ENCODE measurements at regions of chr2 and their contacts with region 1.

Region 1: DNA sequence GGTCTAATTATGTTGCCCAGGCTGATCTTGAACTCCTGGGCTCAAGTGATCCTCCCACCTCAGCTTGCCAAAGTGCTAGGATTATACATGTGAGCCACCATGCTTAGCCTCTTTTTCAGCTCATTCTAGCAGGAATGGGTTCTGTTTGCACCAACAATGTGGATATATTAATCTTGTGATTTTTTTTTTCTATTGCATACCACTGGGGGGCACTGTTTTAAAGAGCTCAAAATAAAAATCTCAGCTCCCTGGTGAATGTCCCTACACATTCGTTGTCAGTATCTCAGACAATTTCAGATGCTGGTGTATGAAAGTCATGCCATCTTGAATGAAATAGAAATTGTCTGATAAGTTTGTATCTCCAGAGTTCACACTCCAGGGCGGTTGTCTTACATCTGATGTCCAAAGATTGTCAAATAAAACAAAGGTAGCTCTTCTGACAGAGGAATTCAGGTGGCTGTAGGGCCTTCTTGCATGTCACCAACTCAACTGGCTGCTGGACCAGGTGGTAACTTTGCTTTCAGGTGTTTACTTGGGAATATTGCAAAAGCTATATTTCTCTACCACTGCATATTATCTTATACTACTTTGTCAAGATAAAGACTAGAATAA is 3.1 kb upstream of the MATN3 start:
- DNase-seq: no peak
- H3K4me3 Mint-ChIP-seq: no peak overlapping the region
- H3K27ac Mint-ChIP-seq: no peak overlapping the region
- H3K4me1 Mint-ChIP-seq: peaks cover 11% of the 10 kb centered on the region
- H3K27me3 Mint-ChIP-seq: peaks cover 37% of the 10 kb centered on the region

Region 2: GRCh38 chr2:19911799-19912509 is 103.6 kb before region 1 on chr2:
- CTCF ChIA-PET with region 1: no interaction called
- POLR2A ChIA-PET with region 1: no interaction called
- DNase-seq: no peak
- H3K4me3 Mint-ChIP-seq: no peak overlapping the region
- H3K27ac Mint-ChIP-seq: no peak overlapping the region
- H3K4me1 Mint-ChIP-seq: no peaks in the 10 kb centered on the region
- H3K27me3 Mint-ChIP-seq: peaks cover 7% of the 10 kb centered on the region

Region 3: DNA sequence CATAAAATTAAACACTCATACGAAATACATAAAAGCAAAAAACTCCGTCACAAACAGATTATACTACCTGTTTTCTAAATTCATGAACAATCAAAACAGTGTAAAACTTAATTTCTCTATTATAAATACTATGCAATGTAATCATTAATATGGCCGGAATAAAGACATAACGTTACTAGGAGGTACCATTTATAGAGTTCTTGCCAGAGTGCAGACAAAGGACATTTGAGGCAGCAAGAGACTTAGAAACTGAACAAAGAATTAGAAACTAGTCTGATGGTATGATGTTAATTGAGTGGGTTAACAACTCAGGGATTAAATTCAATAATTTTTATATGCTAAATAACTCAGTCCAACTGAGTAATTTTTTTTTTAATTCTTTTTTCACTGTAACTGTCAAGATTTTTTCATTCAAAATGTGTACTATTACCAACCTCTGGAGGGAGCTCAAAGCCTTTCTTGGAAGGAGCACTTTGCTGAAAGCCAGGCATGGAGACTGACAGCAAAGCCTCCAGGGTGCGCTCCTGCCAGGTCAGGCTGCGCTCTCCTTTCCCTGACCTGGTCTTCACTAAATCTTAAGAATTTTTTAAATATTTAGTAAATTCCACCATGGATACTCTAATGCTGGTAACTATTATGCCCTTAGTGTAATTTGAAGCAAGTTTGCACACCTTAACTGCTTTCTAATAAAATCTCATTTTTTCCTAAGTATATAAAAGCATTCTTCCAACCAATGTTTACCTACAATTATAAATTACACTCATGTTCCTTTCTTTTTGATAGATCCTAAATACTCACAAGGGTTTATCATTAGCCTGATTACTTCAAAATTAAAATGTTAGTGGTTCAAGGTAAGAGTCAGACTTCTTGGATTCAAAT is 59.8 kb before region 1 on chr2:
- CTCF ChIA-PET with region 1: interaction called, 11 read pairs
- POLR2A ChIA-PET with region 1: no interaction called
- DNase-seq: peak; percentile 56
- H3K4me3 Mint-ChIP-seq: no peak overlapping the region
- H3K27ac Mint-ChIP-seq: no peak overlapping the region
- H3K4me1 Mint-ChIP-seq: no peaks in the 10 kb centered on the region
- H3K27me3 Mint-ChIP-seq: no peaks in the 10 kb centered on the region

Region 4: GRCh38 chr2:20035955-20036666 is 20.5 kb after region 1 on chr2:
- CTCF ChIA-PET with region 1: interaction called, 18 read pairs
- POLR2A ChIA-PET with region 1: interaction called, 3 read pairs
- DNase-seq: no peak
- H3K4me3 Mint-ChIP-seq: no peak overlapping the region
- H3K27ac Mint-ChIP-seq: peak overlapping the region; percentile 36
- H3K4me1 Mint-ChIP-seq: peaks cover 8% of the 10 kb centered on the region
- H3K27me3 Mint-ChIP-seq: no peaks in the 10 kb centered on the region

Region 5: DNA sequence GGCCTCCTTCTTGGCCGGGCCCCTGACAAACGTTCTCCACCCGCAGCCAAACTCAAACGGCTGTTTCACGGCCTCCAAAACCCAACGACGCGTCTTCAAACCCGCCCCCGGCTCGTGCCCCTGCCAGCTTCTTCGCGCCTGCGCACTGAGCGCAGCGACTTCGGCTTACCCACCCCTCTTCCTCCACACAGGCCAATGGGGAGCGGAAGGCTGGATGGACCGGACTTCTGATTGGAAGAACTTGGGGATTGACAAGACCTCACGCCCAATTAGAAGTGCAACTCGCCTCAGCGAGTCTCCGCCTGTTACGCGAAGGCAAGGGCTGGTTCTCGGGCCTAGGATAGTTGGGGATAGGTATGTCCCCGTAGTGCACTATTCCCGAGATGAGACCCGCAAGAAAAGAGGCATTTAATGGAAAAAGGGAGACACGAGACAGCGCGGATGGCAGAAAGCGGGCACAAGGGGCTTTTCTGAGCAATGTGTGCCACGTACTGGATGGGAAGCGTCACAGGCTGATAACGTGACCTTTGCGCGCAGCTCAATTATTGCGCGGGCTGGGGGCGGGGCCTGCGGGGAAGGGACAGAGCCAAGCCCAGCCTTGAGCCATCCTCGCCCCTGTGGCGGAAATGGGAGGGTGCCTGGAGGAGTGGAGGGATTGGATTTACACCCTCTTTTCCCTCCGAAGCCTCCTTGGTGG is 36.1 kb after region 1 on chr2 and contains the start of gene LAPTM4A:
- CTCF ChIA-PET with region 1: interaction called, 30 read pairs
- POLR2A ChIA-PET with region 1: interaction called, 6 read pairs
- DNase-seq: peak; percentile 98
- H3K4me3 Mint-ChIP-seq: no peak within 1 kb of the TSS
- H3K27ac Mint-ChIP-seq: no peak within 1 kb of the TSS
- H3K4me1 Mint-ChIP-seq: peaks cover 27% of the 10 kb centered on the region
- H3K27me3 Mint-ChIP-seq: peaks cover 20% of the 10 kb centered on the region
- total RNA-seq, gene LAPTM4A: 36.1 to 36.7 TPM

Region 6: DNA sequence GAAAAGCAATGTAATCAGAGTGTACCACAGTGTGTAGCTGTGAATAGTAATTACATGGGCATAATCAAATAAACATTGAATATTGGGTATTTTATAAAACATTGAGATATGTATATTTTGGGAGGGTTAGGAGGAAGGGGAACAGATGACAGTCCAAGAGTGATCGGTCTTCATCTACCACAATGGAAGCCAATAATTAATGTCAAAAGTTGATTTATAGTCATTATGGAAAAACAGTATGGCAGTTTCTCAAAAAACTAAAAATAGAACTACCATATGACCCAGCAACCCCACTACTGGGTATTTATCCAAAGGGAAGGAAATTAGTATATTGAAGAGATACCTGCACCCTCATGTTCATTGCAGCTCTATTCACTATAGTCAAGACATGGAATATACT is 41.7 kb after region 1 on chr2:
- CTCF ChIA-PET with region 1: interaction called, 30 read pairs
- POLR2A ChIA-PET with region 1: interaction called, 6 read pairs
- DNase-seq: no peak
- H3K4me3 Mint-ChIP-seq: no peak overlapping the region
- H3K27ac Mint-ChIP-seq: no peak overlapping the region
- H3K4me1 Mint-ChIP-seq: no peaks in the 10 kb centered on the region
- H3K27me3 Mint-ChIP-seq: peaks cover 49% of the 10 kb centered on the region

Region 7: GRCh38 chr2:20097879-20098714 is 82.5 kb after region 1 on chr2:
- CTCF ChIA-PET with region 1: interaction called, 26 read pairs
- POLR2A ChIA-PET with region 1: no interaction called
- DNase-seq: peak; percentile 79
- H3K4me3 Mint-ChIP-seq: no peak overlapping the region
- H3K27ac Mint-ChIP-seq: no peak overlapping the region
- H3K4me1 Mint-ChIP-seq: peaks cover 3% of the 10 kb centered on the region
- H3K27me3 Mint-ChIP-seq: peaks cover 21% of the 10 kb centered on the region

Region 8: DNA sequence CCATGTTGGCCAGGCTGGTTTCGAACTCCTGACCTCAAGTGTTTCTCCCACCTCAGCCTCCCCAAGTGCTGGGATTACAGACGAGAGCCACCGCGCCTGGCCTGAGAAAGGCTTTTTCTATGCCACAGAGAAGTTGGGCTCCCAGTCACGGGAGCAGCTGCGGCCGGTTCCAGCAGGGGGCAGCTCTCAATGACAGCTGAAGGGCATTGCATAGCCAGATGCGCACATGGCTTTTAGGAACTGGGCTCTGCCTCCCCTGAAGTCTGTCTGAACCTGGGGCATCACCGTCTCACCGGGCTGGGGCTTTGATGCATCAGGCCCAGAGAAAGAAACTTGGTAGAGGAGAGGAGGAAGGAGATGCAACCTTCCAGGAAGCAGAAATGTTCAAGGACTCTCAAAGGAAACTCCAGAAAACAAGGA is 120.1 kb after region 1 on chr2:
- CTCF ChIA-PET with region 1: no interaction called
- POLR2A ChIA-PET with region 1: no interaction called
- DNase-seq: peak; percentile 38
- H3K4me3 Mint-ChIP-seq: no peak overlapping the region
- H3K27ac Mint-ChIP-seq: no peak overlapping the region
- H3K4me1 Mint-ChIP-seq: no peaks in the 10 kb centered on the region
- H3K27me3 Mint-ChIP-seq: peaks cover 8% of the 10 kb centered on the region

Region 9: GRCh38 chr2:20164061-20164733 is 148.6 kb after region 1 on chr2:
- CTCF ChIA-PET with region 1: no interaction called
- POLR2A ChIA-PET with region 1: no interaction called
- DNase-seq: no peak
- H3K4me3 Mint-ChIP-seq: no peak overlapping the region
- H3K27ac Mint-ChIP-seq: no peak overlapping the region
- H3K4me1 Mint-ChIP-seq: no peaks in the 10 kb centered on the region
- H3K27me3 Mint-ChIP-seq: peaks cover 17% of the 10 kb centered on the region

Measured in activated CD4-positive, alpha-beta memory T cell treated with anti-CD3 and anti-CD28 coated beads, Interleukin-2, amount 10 ng/mL, durations not matched to agents 7 days and 5 days (primary cell).